Right lobe of liver (tissue), 6 donors: ENCODE measurements at regions of chr7 and their contacts with region 1.

Region 1: GRCh38 chr7:64618785-64619456 is 47.0 kb upstream of the ZNF107 start:
- DNase-seq: no peak
- ATAC-seq: peak; percentile 88 to 97 (median 90)
- H3K4me3 ChIP-seq: no peak overlapping the region
- H3K27ac ChIP-seq: no peak overlapping the region
- H3K4me1 ChIP-seq: no peaks in the 10 kb centered on the region
- H3K27me3 ChIP-seq: no peaks in the 10 kb centered on the region
- CTCF ChIP-seq: peak; percentile 62 to 90 (median 70)
- POLR2A ChIP-seq: no peak

Region 2: GRCh38 chr7:64183126-64183742 is 435.7 kb before region 1 on chr7:
- intact Hi-C with region 1: loop called (anchors 5 kb)
- DNase-seq: no peak
- ATAC-seq: peak; percentile 47 to 76 (median 67)
- H3K4me3 ChIP-seq: no peak overlapping the region
- H3K27ac ChIP-seq: no peak overlapping the region
- H3K4me1 ChIP-seq: no peaks in the 10 kb centered on the region
- H3K27me3 ChIP-seq: no peaks in the 10 kb centered on the region
- CTCF ChIP-seq: peak; percentile 58 to 72 (median 62)
- POLR2A ChIP-seq: no peak